Activated CD4-positive, alpha-beta T cell treated with anti-CD3 and anti-CD28 coated beads for 36 hours (primary cell): ENCODE measurements at regions of chr2 and their contacts with region 1.

Region 1: GRCh38 chr2:28250006-28250405 is 142.7 kb upstream of the FOSL2 start:
- DNase-seq: no peak
- ATAC-seq: no peak
- H3K4me3 Mint-ChIP-seq: no peak overlapping the region
- H3K27ac Mint-ChIP-seq: no peak overlapping the region
- H3K4me1 Mint-ChIP-seq: peaks cover 27% of the 10 kb centered on the region
- H3K27me3 Mint-ChIP-seq: no peaks in the 10 kb centered on the region

Region 2: GRCh38 chr2:28263690-28264089 is 13.7 kb after region 1 on chr2:
- CTCF ChIA-PET with region 1: no interaction called
- POLR2A ChIA-PET with region 1: no interaction called
- intact Hi-C with region 1: no loop called
- DNase-seq: no peak
- ATAC-seq: no peak
- H3K4me3 Mint-ChIP-seq: no peak overlapping the region
- H3K27ac Mint-ChIP-seq: no peak overlapping the region
- H3K4me1 Mint-ChIP-seq: no peaks in the 10 kb centered on the region
- H3K27me3 Mint-ChIP-seq: no peaks in the 10 kb centered on the region

Region 3: DNA sequence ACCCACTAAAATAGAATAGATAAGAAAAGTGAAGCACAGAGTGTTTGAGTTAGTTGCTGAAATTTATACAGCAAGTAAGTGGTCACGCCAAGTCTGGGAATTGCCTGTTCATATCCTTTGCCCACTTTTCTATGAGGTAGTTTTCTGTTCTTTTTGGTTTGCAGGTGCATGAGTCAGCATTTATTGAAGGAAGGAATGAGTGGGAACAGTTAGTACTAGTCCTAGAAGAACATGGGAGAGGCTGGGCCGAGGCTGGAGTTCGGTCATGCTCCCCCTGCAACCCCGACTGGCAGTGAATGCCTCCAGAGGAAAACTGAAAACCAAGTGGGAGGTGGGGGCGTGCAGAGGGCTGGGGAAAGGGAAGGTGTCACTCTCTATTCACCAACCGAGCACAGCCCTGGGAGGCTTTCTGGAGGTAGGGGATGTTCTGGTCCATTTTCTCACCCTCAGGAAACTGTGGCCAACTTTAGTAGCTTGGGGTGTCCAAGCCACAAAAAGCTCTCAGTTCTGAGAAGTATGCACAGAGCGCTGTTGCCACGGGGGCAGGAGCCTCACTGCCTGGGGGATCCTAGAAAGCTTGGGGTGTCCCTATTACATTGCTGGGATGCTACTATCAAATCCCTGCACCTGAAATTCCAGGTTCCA is 184.1 kb after region 1 on chr2:
- CTCF ChIA-PET with region 1: no interaction called
- POLR2A ChIA-PET with region 1: interaction called, 11 read pairs
- intact Hi-C with region 1: no loop called
- DNase-seq: no peak
- ATAC-seq: peak; percentile 21
- H3K4me3 Mint-ChIP-seq: no peak overlapping the region
- H3K27ac Mint-ChIP-seq: no peak overlapping the region
- H3K4me1 Mint-ChIP-seq: peaks cover 17% of the 10 kb centered on the region
- H3K27me3 Mint-ChIP-seq: no peaks in the 10 kb centered on the region